ENCODE measurements at regions of chrX and their contacts with region 1.

Region 1: DNA sequence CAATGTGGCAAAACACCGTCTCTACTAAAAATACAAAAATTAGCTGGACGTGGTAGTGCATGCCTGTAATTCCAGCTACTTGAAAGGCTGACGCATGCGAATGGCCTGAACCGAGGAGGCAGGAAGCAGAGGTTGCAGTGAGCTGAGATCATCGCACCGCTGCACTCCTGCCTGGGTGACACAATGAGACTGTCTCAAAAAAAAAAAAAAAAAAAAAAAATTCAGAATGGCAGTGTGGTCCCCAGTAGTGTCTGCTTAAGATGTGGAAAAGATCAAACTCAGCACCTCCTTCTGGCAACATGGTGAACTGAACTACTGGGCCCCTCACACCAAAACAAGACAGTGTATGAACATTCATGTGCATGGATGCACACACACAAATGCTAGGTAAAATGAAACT is 32.2 kb downstream of the SMS start:
- H3K4me3 ChIP-seq: no peak overlapping the region
- H3K27ac ChIP-seq: no peak overlapping the region
- H3K4me1 ChIP-seq: no peaks in the 10 kb centered on the region
- CTCF ChIP-seq: no peak

Region 2: GRCh38 chrX:21985332-21985777 is 12.6 kb after region 1 on chrX:
- CTCF ChIA-PET with region 1: interaction called, 33 read pairs
- POLR2A ChIA-PET with region 1: no interaction called
- H3K4me3 ChIP-seq: no peak overlapping the region
- H3K27ac ChIP-seq: no peak overlapping the region
- H3K4me1 ChIP-seq: no peaks in the 10 kb centered on the region
- CTCF ChIP-seq: peak; percentile 78

Region 3: GRCh38 chrX:22159071-22159799 is 186.5 kb after region 1 on chrX:
- CTCF ChIA-PET with region 1: no interaction called
- POLR2A ChIA-PET with region 1: no interaction called
- H3K4me3 ChIP-seq: no peak overlapping the region
- H3K27ac ChIP-seq: no peak overlapping the region
- H3K4me1 ChIP-seq: 0 out of 2 replicates have a peak, but pooled peaks cover 4% of the 10 kb centered on the region
- CTCF ChIP-seq: no peak

Measured in HEK293 (cell line).